ENCODE measurements at regions of chr1 and their contacts with region 1.

Region 1: DNA sequence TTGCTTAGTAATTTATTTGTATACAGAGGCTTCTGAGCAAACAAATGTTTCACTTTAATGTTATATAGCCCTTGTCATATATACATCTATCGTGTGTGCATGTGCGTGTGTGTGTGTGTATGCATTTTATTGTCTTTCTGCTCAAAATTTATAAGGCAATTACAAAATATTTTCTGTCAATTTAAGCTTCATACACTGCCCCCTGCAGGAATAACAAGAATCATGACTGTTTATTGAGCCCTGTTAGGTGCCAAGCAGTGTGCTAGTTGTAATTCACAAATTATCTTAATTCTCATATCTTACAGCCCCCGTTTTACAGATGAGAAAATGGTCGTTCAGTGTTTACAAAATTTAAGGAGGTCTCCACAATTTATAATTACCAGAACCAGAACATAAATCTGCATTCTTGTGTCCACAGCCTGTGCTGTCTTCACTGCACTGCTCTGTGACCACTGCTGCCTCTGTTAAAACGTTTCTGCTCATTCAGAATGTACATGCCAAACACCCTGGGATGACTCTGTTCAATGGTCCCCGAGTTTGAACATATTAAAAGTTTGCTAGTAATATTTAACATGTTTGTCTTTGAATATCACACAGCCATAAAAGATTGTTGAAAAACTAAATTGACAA is 181.3 kb downstream of the ATP6V1G3 start:
- DNase-seq: no peak
- ATAC-seq: no peak

Region 2: DNA sequence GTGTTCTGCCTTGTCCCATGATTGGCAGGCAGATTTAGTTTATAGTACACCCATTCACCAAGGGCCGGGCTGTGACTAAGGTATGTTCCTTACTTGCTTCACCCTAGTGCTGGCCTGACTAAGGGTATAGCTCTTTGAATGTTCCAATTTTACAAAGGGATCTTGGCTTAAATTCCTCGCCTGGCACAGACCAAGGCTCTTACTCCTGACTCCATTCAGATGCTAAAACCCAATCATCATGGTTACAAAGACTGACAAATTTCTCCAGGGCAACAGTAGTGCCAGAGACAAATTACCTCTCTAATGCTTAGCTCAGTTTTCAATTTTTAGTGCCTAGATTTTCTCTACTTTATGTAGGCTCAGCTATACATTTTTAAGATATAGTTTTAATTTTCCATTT is 468.2 kb before region 1 on chr1:
- intact Hi-C with region 1: no loop called
- DNase-seq: no peak
- ATAC-seq: no peak

Region 3: DNA sequence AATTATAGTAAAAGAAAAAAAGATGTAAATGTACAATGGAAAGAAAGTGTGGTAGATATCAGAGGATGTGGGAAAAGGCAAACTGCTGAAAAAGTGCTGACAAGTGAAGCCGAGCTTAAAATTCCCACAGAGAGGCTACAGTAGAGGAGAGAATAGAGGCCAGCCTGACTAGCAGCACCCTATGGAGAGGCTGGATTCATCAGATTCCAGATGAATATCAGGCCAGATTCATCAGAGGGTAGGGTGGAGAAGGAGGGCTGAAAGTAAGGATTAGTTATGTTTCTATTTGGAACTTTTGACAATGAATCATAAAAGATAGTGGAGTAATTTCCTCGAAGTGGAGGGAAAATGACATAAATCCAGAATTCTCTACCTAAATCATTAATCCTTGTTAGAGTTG is 262.7 kb before region 1 on chr1:
- intact Hi-C with region 1: loop called in 1 of 2 experiments (anchors 10 kb)
- DNase-seq: no peak
- ATAC-seq: peak in 1 of 2 donors; percentile 25